Brain microvascular endothelial cell (primary cell): ENCODE measurements at regions of chr2 and their contacts with region 1.

Region 1: GRCh38 chr2:199985625-199986207 is 30.3 kb downstream of the MAIP1 start:
- DNase-seq: peak; percentile 66
- H3K4me3 ChIP-seq: no peak overlapping the region
- H3K27ac ChIP-seq: no peak overlapping the region
- H3K27me3 ChIP-seq: no peaks in the 10 kb centered on the region
- CTCF ChIP-seq: peak; percentile 89

Region 2: GRCh38 chr2:200306196-200306930 is 320.6 kb after region 1 on chr2 and contains the start of gene SPATS2L:
- in situ Hi-C with region 1: loop called (anchors 10 kb)
- DNase-seq: peak; percentile 75
- H3K4me3 ChIP-seq: peak within 1 kb of the TSS; percentile 82
- H3K27ac ChIP-seq: peak within 1 kb of the TSS; percentile 86
- H3K27me3 ChIP-seq: no peaks in the 10 kb centered on the region
- CTCF ChIP-seq: no peak